Activated T-helper 2 cell treated with anti-CD3 and anti-CD28 coated beads, Interferon-gamma antibody, Interleukin-2, Interleukin-4, amounts not matched to agents 10 μg/mL and 5 μg/mL and 100 μg/mL, durations not matched to agents 14 hours and 24 hours and 36 hours (primary cell): ENCODE measurements at regions of chr16 and their contacts with region 1.

Region 1: GRCh38 chr16:3023669-3024478 is at the starts of genes HCFC1R1 and THOC6:
- DNase-seq: peak; percentile 95
- H3K4me3 Mint-ChIP-seq: peak within 1 kb of the TSS; percentile 87
- H3K27ac Mint-ChIP-seq: peak within 1 kb of the TSS; percentile 90
- H3K4me1 Mint-ChIP-seq: peaks cover 39% of the 10 kb centered on the region
- H3K27me3 Mint-ChIP-seq: peaks cover 3% of the 10 kb centered on the region
- total RNA-seq, gene HCFC1R1: 29.9 and 30.3 TPM in 2 replicates
- total RNA-seq, gene THOC6: 59.0 and 59.1 TPM in 2 replicates

Region 2: DNA sequence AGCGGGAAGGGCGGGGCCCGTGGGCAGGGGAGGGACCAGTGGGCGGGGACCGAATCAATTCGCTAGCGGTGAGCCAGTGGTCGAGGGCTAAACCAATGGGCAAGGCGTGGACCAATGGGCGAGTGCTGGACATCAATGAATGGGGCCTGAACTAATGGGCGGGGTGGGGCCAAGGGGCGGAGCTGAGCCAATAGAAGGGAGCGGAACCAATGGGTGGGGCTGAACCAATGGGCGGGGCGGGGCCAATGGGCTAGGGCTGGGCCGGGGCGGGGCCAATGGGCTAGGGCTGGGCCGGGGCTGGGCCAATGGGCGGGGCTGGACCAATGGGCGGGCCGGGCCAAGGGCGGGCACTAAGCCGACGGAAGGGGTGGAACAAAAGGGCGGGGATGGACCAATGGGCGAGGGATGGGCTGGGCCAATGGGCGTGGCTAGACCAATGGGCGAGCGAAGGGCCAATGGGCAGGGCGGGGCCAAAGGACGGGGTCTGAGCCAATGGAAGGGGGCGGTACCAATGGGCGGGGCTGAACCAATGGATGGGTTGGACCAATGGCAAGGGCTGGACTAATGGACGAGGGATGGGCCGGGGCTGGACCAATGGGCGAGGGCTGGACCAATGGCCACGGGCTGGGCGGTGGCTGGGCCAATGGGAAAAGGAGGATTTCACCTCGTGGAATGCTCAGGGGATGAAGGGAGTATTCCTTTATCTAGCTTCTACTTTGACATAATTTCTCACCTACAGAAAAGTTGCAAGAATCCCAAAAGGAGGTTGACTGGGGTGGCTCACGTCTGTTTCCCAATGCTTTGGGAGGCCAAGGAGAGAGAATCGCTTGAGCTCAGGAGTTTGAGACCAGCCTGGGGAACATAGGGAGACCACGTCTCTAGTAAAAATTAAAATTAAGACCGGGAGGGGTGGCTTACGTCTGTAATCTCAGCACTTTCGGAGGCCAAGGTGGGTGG is 118.2 kb before region 1 on chr16:
- intact Hi-C with region 1: loop called (anchors 2 kb)
- DNase-seq: peak; percentile 95
- H3K4me3 Mint-ChIP-seq: peak overlapping the region; percentile 92
- H3K27ac Mint-ChIP-seq: peak overlapping the region; percentile 58
- H3K4me1 Mint-ChIP-seq: peaks cover 19% of the 10 kb centered on the region
- H3K27me3 Mint-ChIP-seq: peaks cover 4% of the 10 kb centered on the region

Region 3: GRCh38 chr16:2980227-2981086 is 43.4 kb before region 1 on chr16 and contains the start of gene PKMYT1:
- intact Hi-C with region 1: loop called (anchors 5 kb)
- DNase-seq: peak; percentile 95
- H3K4me3 Mint-ChIP-seq: peak within 1 kb of the TSS; percentile 90
- H3K27ac Mint-ChIP-seq: peak within 1 kb of the TSS; percentile 88
- H3K4me1 Mint-ChIP-seq: peaks cover 9% of the 10 kb centered on the region
- H3K27me3 Mint-ChIP-seq: no peaks in the 10 kb centered on the region
- total RNA-seq, gene PKMYT1: 102 and 106 TPM in 2 replicates

Region 4: DNA sequence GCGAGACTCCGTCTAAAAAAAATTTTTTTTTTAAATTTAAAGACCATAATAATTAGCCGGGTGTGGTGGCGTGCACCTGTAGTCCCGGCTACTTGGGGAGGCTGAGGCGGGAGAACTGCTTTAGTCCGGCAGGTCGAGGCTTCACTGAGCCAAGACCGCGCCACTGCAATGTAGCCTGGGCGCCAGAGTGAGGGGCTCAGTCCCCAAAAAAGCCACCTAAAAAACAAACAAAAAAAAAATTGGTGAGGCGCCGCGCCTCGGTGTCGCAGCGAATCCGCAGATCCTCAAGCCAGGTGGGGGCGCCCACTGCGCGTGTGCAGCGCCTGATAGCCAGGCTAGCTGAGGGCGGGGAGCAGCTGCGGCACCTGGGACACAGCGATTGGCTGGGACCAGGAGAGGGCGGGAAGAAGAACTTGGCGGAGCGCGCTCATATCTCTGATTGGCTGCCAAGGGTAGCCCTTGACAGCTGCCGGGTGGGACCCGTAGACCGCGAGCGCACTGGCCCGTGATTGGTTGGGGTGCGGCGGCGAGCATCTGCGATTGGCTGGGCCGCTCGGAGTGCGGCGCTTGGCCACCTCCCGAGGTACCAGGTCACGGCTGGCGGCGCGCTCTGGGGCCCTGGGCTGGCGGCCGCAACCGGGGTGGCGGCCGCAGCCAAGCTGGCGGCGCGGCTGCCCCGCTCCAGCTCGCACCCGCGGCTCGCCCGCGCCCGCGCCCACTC is 20.1 kb before region 1 on chr16:
- intact Hi-C with region 1: loop called (anchors 1 kb)
- DNase-seq: peak; percentile 99
- H3K4me3 Mint-ChIP-seq: peak overlapping the region; percentile 71
- H3K27ac Mint-ChIP-seq: no peak overlapping the region
- H3K4me1 Mint-ChIP-seq: peaks cover 25% of the 10 kb centered on the region
- H3K27me3 Mint-ChIP-seq: peaks cover 4% of the 10 kb centered on the region

Region 5: GRCh38 chr16:3123986-3124886 is 100.4 kb after region 1 on chr16:
- intact Hi-C with region 1: loop called (anchors 10 kb)
- DNase-seq: peak; percentile 97
- H3K4me3 Mint-ChIP-seq: peak overlapping the region; percentile 96
- H3K27ac Mint-ChIP-seq: peak overlapping the region; percentile 92
- H3K4me1 Mint-ChIP-seq: peaks cover 34% of the 10 kb centered on the region
- H3K27me3 Mint-ChIP-seq: no peaks in the 10 kb centered on the region